Mammary epithelial cell (primary cell): ENCODE measurements at regions of chr10 and their contacts with region 1.

Region 1: GRCh38 chr10:97204826-97205679 is 19.3 kb upstream of the SLIT1 start:
- DNase-seq: no peak
- H3K4me3 ChIP-seq: no peak overlapping the region
- H3K27ac ChIP-seq: no peak overlapping the region
- H3K4me1 ChIP-seq: no peaks in the 10 kb centered on the region
- H3K27me3 ChIP-seq: no peaks in the 10 kb centered on the region
- CTCF ChIP-seq: no peak

Region 2: DNA sequence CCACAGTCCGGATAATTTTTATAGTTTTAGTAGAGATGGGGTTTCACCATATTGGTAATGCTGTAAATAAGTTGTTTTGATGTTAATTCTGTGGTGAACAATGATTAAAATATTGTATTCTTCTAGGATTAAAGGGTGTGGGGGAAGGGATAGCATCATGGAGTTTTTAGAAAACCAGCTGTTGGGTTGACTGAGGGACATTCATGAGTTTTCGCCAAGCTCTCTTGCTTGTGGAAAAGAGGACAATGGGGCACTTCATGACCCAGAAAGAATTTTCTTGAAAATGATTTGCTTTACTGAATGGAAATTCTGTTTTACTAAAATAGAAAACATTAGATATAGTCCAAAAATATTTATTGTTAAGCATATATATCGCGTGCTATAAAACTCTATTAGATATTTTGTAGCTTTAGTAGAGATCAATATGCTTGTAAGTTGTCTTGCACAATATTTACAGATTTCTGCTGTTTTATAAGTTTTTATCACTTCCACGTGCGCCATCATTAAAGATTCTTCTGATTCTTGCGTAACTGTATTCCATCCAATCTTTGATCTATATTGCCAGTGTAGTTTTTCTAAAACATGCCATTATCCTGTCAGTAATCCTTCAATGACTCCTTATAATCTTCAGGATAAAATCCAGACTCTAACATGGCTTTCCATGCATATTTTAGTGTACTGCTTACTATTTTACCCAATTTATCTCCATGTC is 331.1 kb before region 1 on chr10:
- CTCF ChIA-PET with region 1: interaction called, 12 read pairs
- dilution Hi-C with region 1: no loop called
- in situ Hi-C with region 1: no loop called
- intact Hi-C with region 1: no loop called
- DNase-seq: no peak
- H3K4me3 ChIP-seq: no peak overlapping the region
- H3K27ac ChIP-seq: no peak overlapping the region
- H3K4me1 ChIP-seq: no peaks in the 10 kb centered on the region
- H3K27me3 ChIP-seq: no peaks in the 10 kb centered on the region
- CTCF ChIP-seq: no peak

Region 3: DNA sequence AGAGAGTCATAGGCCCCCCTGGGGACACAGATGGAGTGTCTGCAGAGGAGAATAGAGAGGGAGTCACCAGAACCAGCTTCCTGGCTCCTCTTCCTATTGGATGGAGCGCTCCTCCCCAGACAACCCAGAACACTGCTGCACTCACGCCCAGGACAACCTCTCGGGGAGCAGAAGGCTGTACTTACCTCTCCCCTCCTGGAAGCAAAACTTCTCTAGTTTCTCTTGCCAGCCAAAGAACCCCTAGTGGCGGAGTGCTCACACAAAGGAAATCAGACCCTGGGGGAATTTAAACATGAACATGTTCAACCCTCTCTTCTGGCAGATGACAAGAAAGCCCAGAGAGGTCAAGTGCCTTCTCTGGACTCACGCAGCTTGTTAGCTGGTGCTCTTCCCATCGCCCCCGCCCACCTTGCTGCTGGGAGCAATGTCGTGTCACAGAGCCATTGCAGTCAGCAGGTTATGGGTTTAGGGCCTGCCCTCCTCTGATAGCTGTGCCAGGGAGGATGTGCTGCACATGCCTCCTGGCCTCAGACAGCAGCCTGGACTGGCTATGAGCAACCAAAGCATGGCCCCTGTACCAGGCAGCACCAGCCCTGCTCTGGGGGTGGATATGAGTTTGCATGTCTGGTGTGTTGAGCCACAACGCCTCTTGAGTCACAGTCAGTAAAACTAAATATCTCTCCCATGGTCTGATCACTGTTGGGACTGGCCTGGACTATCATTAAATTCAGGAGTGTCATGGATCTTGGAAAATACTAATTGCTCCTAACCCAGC is 103.7 kb before region 1 on chr10:
- CTCF ChIA-PET with region 1: no interaction called
- dilution Hi-C with region 1: no loop called
- in situ Hi-C with region 1: no loop called
- intact Hi-C with region 1: no loop called
- DNase-seq: no peak
- H3K4me3 ChIP-seq: no peak overlapping the region
- H3K27ac ChIP-seq: no peak overlapping the region
- H3K4me1 ChIP-seq: no peaks in the 10 kb centered on the region
- H3K27me3 ChIP-seq: peaks cover 6% of the 10 kb centered on the region
- CTCF ChIP-seq: no peak